Spleen (tissue), 13 donors: ENCODE measurements at regions of chr18 and their contacts with region 1.

Region 1: DNA sequence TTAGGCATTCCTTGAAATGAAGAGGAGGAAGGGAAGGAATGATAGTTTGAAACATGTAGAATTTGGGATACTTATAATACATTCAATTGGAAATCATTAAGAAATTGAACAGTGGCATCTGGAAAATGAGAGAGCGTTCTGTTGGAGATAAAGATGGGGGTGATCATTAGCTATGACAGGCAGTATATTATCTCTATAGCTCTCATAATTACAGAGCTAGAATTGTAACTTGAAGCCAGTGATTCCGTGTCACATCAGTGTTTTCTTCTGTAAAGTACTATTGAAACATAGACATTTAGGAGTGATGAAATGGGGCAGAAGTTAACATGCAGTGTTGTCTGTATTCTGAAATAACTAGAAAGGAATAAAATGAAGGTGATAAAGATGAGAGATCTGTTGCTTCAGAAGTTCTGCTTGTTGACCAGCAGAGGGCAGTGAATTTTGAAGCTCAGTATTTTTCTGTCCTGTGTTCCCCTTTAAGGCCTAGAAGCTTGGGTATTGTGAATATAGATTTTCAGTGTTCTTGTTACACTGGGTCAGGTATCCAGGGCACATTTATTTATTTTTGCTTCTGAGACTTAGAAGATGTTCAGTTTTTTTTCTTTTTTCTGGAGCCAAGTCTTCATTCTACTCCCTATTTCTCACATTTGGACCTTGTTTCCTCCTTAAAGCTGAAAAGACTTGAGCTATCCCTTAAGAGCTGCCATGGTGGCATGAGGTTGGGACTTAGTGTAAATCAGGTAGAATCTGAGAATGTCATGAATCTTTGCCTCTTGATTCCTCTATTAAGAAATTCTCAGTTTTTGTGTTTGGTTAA is 157.4 kb downstream of the TAF4B start:
- DNase-seq: no peak
- H3K4me3 ChIP-seq: no peak overlapping the region
- H3K27ac ChIP-seq: no peak overlapping the region
- H3K4me1 ChIP-seq: peaks cover 0 to 10% (median 0%) of the 10 kb centered on the region in 6 donors
- H3K27me3 ChIP-seq: no peaks in the 10 kb centered on the region
- CTCF ChIP-seq: peak; percentile 18 to 81 (median 67)
- POLR2A ChIP-seq: no peak

Region 2: DNA sequence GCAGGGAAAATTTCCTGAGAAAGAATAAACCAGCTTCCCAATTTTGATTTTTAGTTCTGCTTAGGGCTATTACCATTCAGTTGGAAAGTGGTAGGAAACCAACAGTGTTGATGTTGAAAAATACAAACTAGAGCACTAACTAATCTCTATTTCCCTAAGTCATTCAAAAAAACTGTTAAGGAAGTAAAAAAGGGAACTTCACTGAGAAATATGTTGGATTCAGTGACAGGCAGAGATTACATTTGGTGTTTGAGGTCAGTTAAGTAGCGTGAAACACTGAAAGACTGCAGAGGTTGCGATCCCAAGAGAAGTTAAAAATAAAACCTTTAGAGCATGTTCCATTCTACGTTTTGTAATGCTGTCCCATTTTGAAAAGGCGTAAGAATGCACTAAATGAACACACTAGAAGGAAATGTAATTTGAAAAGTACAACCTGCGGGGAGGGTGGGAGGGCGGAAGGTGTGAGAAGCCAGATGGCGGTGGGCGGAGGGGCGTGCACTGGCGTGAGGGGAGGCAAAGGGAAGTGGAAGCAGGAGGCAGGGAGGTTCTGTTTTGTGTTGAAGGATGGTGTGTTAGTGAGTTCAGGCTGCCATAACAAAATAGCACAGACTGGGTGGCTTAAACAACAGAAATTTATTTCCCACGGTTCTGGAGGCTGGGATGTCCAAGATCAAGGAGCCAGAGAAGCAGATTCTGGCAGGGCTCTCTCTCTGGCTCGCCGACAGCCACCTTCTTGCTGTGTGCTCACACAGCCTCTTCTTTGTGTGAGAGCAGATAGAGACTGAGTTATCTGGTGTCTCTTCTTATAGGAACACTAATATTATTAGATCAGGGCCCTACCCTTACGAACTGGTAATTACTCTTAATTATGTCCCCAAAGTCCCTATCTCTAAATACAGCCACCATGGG is 259.0 kb after region 1 on chr18:
- intact Hi-C with region 1: loop called (anchors 10 kb)
- DNase-seq: no peak
- H3K4me3 ChIP-seq: no peak overlapping the region
- H3K27ac ChIP-seq: no peak overlapping the region
- H3K4me1 ChIP-seq: peaks cover 0 to 6% (median 0%) of the 10 kb centered on the region in 6 donors
- H3K27me3 ChIP-seq: peaks cover 0 to 7% (median 0%) of the 10 kb centered on the region in 7 donors
- CTCF ChIP-seq: no peak
- POLR2A ChIP-seq: no peak